ENCODE measurements at regions of chr14 and their contacts with region 1.

Region 1: GRCh38 chr14:82951171-82951570 is 1417.5 kb upstream of the SEL1L start:
- DNase-seq: no peak
- H3K4me3 ChIP-seq: no peak overlapping the region
- H3K27ac ChIP-seq: no peak overlapping the region
- H3K4me1 ChIP-seq: no peaks in the 10 kb centered on the region
- H3K27me3 ChIP-seq: no peaks in the 10 kb centered on the region
- CTCF ChIP-seq: no peak
- POLR2A ChIP-seq: no peak

Region 2: GRCh38 chr14:82488473-82488872 is 462.7 kb before region 1 on chr14:
- intact Hi-C with region 1: loop called (anchors 5 kb)
- DNase-seq: no peak
- H3K4me3 ChIP-seq: no peak overlapping the region
- H3K27ac ChIP-seq: no peak overlapping the region
- H3K4me1 ChIP-seq: no peaks in the 10 kb centered on the region
- H3K27me3 ChIP-seq: no peaks in the 10 kb centered on the region
- CTCF ChIP-seq: no peak
- POLR2A ChIP-seq: no peak

Region 3: DNA sequence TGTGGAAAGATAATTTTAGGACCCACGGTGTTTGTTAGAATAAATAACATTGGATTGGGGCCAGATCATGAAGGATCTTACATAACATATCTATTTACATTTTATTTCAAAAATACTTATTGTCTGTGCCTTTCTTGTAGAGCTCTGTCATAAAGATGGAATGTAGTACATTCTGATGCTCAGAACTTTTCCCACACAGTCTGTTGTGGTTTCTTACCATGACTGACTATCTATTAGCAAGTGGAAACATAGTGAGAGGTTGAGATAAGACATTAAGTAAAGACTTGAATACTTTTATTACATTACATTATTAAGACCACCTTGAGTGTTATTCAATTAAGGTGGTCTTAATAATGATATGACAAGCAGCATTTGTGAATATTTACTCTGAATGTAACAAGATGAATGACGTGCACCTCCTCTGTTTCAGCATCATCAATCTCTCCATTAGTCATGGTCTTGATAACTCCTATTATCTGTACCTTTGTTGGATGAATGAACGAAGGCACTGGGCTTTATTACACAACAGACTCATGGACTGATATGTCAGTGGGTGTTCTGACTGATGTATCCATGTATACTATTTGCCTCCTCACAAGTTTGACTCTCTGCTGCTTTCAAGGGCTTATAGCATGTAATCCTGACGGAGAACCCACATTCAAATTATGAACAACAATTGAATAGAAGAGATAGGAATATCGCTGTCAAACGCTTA is 1695.8 kb after region 1 on chr14:
- intact Hi-C with region 1: no loop called
- DNase-seq: no peak
- H3K4me3 ChIP-seq: no peak overlapping the region
- H3K27ac ChIP-seq: no peak overlapping the region
- H3K4me1 ChIP-seq: no peaks in the 10 kb centered on the region
- H3K27me3 ChIP-seq: no peaks in the 10 kb centered on the region
- CTCF ChIP-seq: no peak
- POLR2A ChIP-seq: no peak